ENCODE measurements at regions of chr12 and their contacts with region 1.

Region 1: GRCh38 chr12:110742718-110743570 is at the start of gene PPP1CC:
- DNase-seq: peak; percentile 81 to 97 (median 90)
- ATAC-seq: peak; percentile 90
- H3K4me3 ChIP-seq: peak within 1 kb of the TSS; percentile 95
- H3K4me3 Mint-ChIP-seq: peak within 1 kb of the TSS; percentile 100
- H3K27ac ChIP-seq: peak within 1 kb of the TSS; percentile 50 to 71
- H3K27ac Mint-ChIP-seq: peak within 1 kb of the TSS; percentile 98
- H3K4me1 ChIP-seq: peaks cover 22% of the 10 kb centered on the region
- H3K4me1 Mint-ChIP-seq: peaks cover 57% of the 10 kb centered on the region
- H3K27me3 ChIP-seq: no peaks in the 10 kb centered on the region
- H3K27me3 Mint-ChIP-seq: no peaks in the 10 kb centered on the region
- CTCF ChIP-seq: no peak
- total RNA-seq, gene PPP1CC: 146 to 150 TPM

Region 2: DNA sequence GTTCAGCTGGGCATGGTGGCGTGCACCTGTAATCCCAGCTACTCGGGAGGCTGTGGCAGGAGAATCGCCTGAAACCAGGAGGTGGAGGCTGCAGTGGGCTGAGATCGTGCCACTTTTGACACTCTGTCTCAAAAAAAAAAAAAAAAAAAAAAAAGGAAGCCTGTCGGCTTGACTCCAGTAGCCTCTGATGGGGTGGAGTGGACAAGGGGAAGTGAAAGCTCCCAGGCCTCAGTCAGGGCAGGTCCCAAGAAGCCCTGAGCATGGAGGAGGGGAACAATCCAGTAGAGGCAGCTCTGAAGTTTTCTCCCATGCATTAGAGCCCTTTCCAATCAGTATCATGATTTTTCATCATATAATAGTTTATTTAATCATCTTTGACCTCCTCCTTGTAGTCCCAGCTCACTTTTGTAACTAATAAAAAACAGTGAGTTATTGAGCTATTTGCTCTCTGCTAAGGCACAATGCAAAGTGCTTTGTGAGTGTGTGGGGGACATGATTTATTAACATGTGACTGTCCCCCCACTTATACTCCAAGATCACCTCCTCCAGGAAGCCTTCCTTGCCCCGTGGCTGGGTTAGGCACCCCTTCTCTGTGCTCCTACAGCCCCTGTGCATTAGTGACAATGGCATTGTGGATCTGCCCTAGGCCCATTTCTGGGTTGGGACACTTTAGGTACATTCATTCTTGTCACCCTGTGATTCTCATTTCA is 1880.9 kb before region 1 on chr12:
- CTCF ChIA-PET with region 1: no interaction called
- POLR2A ChIA-PET with region 1: no interaction called
- intact Hi-C with region 1: loop called in 1 of 2 experiments (anchors 10 kb)
- DNase-seq: peak in 3 of 14 experiments; percentile 43 to 65 (median 54)
- ATAC-seq: no peak
- H3K4me3 ChIP-seq: no peak overlapping the region
- H3K4me3 Mint-ChIP-seq: no peak overlapping the region
- H3K27ac ChIP-seq: no peak overlapping the region
- H3K27ac Mint-ChIP-seq: no peak overlapping the region
- H3K4me1 ChIP-seq: peaks cover 16% of the 10 kb centered on the region
- H3K4me1 Mint-ChIP-seq: peaks cover 22% of the 10 kb centered on the region
- H3K27me3 ChIP-seq: no peaks in the 10 kb centered on the region
- H3K27me3 Mint-ChIP-seq: no peaks in the 10 kb centered on the region
- CTCF ChIP-seq: no peak

Region 3: GRCh38 chr12:109573029-109573913 is 1169.7 kb before region 1 on chr12 and contains the starts of genes MMAB and MVK:
- CTCF ChIA-PET with region 1: no interaction called
- POLR2A ChIA-PET with region 1: no interaction called
- intact Hi-C with region 1: loop called in 1 of 2 experiments (anchors 10 kb)
- DNase-seq: peak; percentile 95 to 100 (median 98)
- ATAC-seq: peak; percentile 91
- H3K4me3 ChIP-seq: peak within 1 kb of the TSS; percentile 78
- H3K4me3 Mint-ChIP-seq: peak within 1 kb of the TSS; percentile 99
- H3K27ac ChIP-seq: peak within 1 kb of the TSS; percentile 83 to 96
- H3K27ac Mint-ChIP-seq: peak within 1 kb of the TSS; percentile 95
- H3K4me1 ChIP-seq: peaks cover 19% of the 10 kb centered on the region
- H3K4me1 Mint-ChIP-seq: peaks cover 29% of the 10 kb centered on the region
- H3K27me3 ChIP-seq: no peaks in the 10 kb centered on the region
- H3K27me3 Mint-ChIP-seq: no peaks in the 10 kb centered on the region
- CTCF ChIP-seq: no peak
- total RNA-seq, gene MMAB: 8.6 to 9.2 TPM
- total RNA-seq, gene MVK: 8.2 to 8.4 TPM

Region 4: GRCh38 chr12:110501752-110502738 is 240.9 kb before region 1 on chr12 and contains the starts of genes RAD9B and VPS29:
- CTCF ChIA-PET with region 1: interaction called, 4 read pairs
- POLR2A ChIA-PET with region 1: interaction called, 9 read pairs
- intact Hi-C with region 1: loop called in 1 of 2 experiments (anchors 5 kb)
- DNase-seq: peak; percentile 97 to 100 (median 98)
- ATAC-seq: peak; percentile 92
- H3K4me3 ChIP-seq: peak within 1 kb of the TSS; percentile 96
- H3K4me3 Mint-ChIP-seq: peak within 1 kb of the TSS; percentile 98
- H3K27ac ChIP-seq: peak within 1 kb of the TSS; percentile 90 to 93
- H3K27ac Mint-ChIP-seq: peak within 1 kb of the TSS; percentile 90
- H3K4me1 ChIP-seq: peaks cover 24% of the 10 kb centered on the region
- H3K4me1 Mint-ChIP-seq: peaks cover 39% of the 10 kb centered on the region
- H3K27me3 ChIP-seq: no peaks in the 10 kb centered on the region
- H3K27me3 Mint-ChIP-seq: no peaks in the 10 kb centered on the region
- CTCF ChIP-seq: no peak
- total RNA-seq, gene RAD9B: 0.31 to 0.63 TPM
- total RNA-seq, gene VPS29: 62.5 to 64.9 TPM

Region 5: DNA sequence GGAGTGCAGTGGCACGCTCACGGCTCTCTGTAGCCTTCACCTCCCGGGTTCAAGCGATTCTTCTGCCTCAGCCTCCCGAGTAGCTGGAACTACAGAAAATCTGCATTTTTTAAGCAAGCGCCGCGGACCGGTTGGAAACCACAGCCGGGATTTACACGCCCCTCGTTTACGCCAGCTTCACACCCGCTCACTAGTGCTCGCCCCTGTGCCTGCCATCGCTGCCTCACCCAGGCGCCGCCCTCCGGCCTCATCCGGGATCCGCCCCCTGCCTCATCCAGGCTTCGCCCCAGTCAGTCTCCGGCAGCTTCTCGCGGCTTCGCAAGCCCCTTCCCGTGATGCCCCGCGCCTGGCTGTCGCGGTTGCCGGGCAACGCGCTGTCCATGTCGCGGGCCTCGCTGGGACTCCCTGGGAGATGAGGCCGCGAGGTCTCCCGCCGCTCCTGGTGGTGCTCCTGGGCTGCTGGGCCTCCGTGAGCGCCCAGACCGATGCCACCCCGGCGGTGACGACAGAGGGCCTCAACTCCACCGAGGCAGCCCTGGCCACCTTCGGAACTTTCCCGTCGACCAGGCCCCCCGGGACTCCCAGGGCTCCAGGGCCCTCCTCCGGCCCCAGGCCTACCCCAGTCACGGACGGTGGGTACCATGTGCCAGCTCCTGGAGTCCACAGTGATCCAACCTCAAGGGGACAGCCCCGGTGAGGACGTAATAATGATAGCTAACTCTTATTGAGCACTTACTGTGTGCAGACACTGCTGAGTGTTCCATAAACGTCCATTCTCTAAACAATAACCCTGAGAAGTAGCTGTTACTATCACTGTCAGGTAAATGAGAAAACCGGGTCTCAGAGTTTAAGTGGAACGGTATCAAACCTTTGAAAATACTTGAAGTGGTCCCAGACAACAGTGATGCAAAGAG is 128.9 kb before region 1 on chr12 and contains the start of gene TCTN1:
- CTCF ChIA-PET with region 1: no interaction called
- POLR2A ChIA-PET with region 1: interaction called, 6 read pairs
- intact Hi-C with region 1: loop called in 1 of 2 experiments (anchors 2 kb)
- DNase-seq: peak; percentile 91 to 98 (median 96)
- ATAC-seq: peak; percentile 99
- H3K4me3 ChIP-seq: peak within 1 kb of the TSS; percentile 73
- H3K4me3 Mint-ChIP-seq: peak within 1 kb of the TSS; percentile 89
- H3K27ac ChIP-seq: peak within 1 kb of the TSS; percentile 61 to 68
- H3K27ac Mint-ChIP-seq: peak within 1 kb of the TSS; percentile 83
- H3K4me1 ChIP-seq: peaks cover 17% of the 10 kb centered on the region
- H3K4me1 Mint-ChIP-seq: peaks cover 4% of the 10 kb centered on the region
- H3K27me3 ChIP-seq: no peaks in the 10 kb centered on the region
- H3K27me3 Mint-ChIP-seq: no peaks in the 10 kb centered on the region
- CTCF ChIP-seq: no peak
- total RNA-seq, gene TCTN1: 5.0 to 5.5 TPM

Region 6: DNA sequence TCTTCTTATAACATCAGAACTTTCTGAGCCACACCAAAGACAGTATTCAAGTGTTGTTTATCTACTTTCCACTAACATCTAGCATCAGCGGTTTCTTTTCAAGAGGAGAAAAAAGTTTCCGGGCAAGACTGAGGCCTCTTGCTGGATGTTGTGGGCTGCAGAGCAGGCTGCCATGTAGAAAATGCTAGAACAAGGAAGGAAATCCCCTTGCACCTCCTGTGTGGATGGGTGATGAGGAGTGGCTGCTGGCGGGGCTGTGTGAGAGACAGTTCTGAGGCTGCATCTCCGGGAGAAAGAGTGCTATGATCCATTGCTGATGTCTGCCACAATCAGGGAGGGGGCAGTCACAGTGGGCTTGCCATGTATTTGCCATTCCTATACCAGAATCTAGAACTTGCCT is 37.5 kb after region 1 on chr12:
- CTCF ChIA-PET with region 1: no interaction called
- POLR2A ChIA-PET with region 1: interaction called, 6 read pairs
- intact Hi-C with region 1: loop called (anchors 2 to 5 kb)
- DNase-seq: peak; percentile 4 to 76 (median 33)
- ATAC-seq: peak; percentile 88
- H3K4me3 ChIP-seq: no peak overlapping the region
- H3K4me3 Mint-ChIP-seq: peak overlapping the region; percentile 42
- H3K27ac ChIP-seq: peak overlapping the region in 1 of 2 donors; percentile 18
- H3K27ac Mint-ChIP-seq: peak overlapping the region; percentile 77
- H3K4me1 ChIP-seq: peaks cover 43% of the 10 kb centered on the region
- H3K4me1 Mint-ChIP-seq: peaks cover 44% of the 10 kb centered on the region
- H3K27me3 ChIP-seq: no peaks in the 10 kb centered on the region
- H3K27me3 Mint-ChIP-seq: no peaks in the 10 kb centered on the region
- CTCF ChIP-seq: no peak

Measured in CD4-positive, alpha-beta T cell (primary cell).